GM12878 (cell line): ENCODE measurements at regions of chr7 and their contacts with region 1.

Region 1: DNA sequence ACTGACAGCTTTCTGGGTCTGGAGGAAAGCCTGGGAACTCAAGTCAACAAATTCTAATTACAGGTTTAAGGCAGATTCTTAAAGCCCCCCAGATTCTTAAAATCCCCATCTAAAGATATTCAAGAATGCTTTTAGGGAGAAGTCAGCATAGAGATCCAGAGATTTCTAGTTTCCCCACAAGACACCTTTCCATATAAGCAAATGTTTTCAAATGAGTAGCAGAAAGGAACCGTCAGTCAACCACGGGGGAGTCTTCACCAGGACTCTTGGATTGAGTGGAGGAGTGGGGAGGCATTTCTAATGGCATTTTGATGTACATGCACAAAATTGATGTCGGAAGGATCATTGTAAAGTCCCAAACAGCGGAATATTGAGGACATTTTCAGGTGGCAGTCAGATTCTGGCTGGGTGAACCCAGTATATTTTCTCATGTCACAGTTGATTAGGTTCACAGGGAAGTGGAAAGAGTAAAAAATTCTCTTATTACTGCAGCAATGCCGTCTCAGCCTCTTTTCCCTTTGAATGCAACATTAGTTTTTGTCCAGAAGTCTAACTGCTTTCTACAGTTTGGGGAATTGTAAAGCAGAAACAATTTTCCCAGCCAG is 191.7 kb upstream of the YAE1 start:
- DNase-seq: no peak
- ATAC-seq: no peak
- H3K4me3 ChIP-seq: no peak overlapping the region
- H3K27ac ChIP-seq: no peak overlapping the region
- H3K4me1 ChIP-seq: no peaks in the 10 kb centered on the region
- H3K27me3 ChIP-seq: no peaks in the 10 kb centered on the region; a peak in 1 of 4 replicates
- CTCF ChIP-seq: no peak
- EP300 ChIP-seq: no peak
- POLR2A ChIP-seq: no peak
- RAD21 ChIP-seq: no peak

Region 2: DNA sequence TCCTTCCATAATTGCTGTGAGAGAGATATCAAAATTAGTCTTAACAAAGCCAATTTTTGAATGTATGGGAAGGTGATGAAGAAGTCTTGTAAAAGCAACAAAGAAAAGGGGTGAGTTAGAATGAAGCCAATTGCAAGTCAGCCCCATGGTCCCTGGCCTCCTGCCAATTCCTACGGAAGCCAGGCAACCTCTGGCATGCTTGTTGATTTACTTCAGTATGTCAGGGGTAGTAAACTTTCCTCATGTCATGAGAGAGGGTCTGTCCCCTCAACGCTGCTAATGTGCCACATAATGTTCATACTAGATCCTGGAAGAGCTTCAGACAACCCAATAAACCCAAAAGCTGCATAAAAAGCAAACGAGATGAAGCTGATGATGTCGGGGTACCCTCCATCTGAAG is 32.6 kb after region 1 on chr7:
- CTCF ChIA-PET with region 1: no interaction called
- POLR2A ChIA-PET with region 1: no interaction called
- RAD21 ChIA-PET with region 1: interaction called, 3 read pairs
- SMC1A ChIA-PET with region 1: interaction called, 6 read pairs
- in situ Hi-C with region 1: no loop called
- intact Hi-C with region 1: loop called (anchors 5 kb)
- DNase-seq: no peak
- ATAC-seq: no peak
- H3K4me3 ChIP-seq: no peak overlapping the region
- H3K27ac ChIP-seq: no peak overlapping the region
- H3K4me1 ChIP-seq: no peaks in the 10 kb centered on the region
- H3K27me3 ChIP-seq: no peaks in the 10 kb centered on the region
- CTCF ChIP-seq: no peak
- EP300 ChIP-seq: no peak
- POLR2A ChIP-seq: no peak
- RAD21 ChIP-seq: no peak